AG04449 (cell line): ENCODE measurements at regions of chr7 and their contacts with region 1.

Region 1: GRCh38 chr7:137898839-137899721 is 52.3 kb upstream of the DGKI start:
- DNase-seq: no peak
- H3K4me3 ChIP-seq: no peak overlapping the region
- CTCF ChIP-seq: peak; percentile 98

Region 2: GRCh38 chr7:137606061-137606674 is 292.9 kb before region 1 on chr7:
- CTCF ChIA-PET with region 1: interaction called, 97 read pairs
- POLR2A ChIA-PET with region 1: interaction called, 4 read pairs
- DNase-seq: no peak
- H3K4me3 ChIP-seq: no peak overlapping the region
- CTCF ChIP-seq: no peak

Region 3: GRCh38 chr7:137916564-137916963 is 17.5 kb after region 1 on chr7:
- CTCF ChIA-PET with region 1: interaction called, 24 read pairs
- POLR2A ChIA-PET with region 1: no interaction called
- DNase-seq: no peak
- H3K4me3 ChIP-seq: no peak overlapping the region
- CTCF ChIP-seq: no peak

Region 4: GRCh38 chr7:137967143-137968018 is 68.3 kb after region 1 on chr7:
- CTCF ChIA-PET with region 1: interaction called, 15 read pairs
- POLR2A ChIA-PET with region 1: no interaction called
- DNase-seq: no peak
- H3K4me3 ChIP-seq: no peak overlapping the region
- CTCF ChIP-seq: no peak

Region 5: GRCh38 chr7:138002096-138002827 is 103.2 kb after region 1 on chr7:
- CTCF ChIA-PET with region 1: interaction called, 831 read pairs
- POLR2A ChIA-PET with region 1: interaction called, 3 read pairs
- DNase-seq: peak; percentile 99
- H3K4me3 ChIP-seq: peak overlapping the region; percentile 97
- CTCF ChIP-seq: peak; percentile 70

Region 6: DNA sequence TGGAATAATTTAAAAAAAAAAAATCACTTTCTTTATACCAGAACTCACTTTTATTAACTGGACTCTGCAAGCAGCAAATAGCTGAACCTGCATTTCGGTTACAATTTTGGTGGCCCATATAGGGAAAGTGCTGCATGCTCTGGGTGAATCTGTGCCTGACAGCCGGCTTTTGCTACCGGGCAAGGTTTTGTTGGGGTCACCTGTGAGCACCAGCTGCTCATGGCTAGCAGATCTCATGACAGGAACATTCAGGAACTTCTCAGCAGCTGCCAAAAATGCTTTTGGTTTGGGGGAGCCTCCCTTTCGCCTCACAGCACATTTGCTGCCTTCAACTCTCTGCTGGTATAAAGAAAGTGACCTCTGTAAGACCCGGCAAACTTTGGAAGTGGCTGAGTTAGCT is 116.0 kb after region 1 on chr7:
- CTCF ChIA-PET with region 1: interaction called, 831 read pairs
- POLR2A ChIA-PET with region 1: no interaction called
- DNase-seq: no peak
- H3K4me3 ChIP-seq: no peak overlapping the region
- CTCF ChIP-seq: no peak